B cell (primary cell): ENCODE measurements at regions of chr4 and their contacts with region 1.

Region 1: DNA sequence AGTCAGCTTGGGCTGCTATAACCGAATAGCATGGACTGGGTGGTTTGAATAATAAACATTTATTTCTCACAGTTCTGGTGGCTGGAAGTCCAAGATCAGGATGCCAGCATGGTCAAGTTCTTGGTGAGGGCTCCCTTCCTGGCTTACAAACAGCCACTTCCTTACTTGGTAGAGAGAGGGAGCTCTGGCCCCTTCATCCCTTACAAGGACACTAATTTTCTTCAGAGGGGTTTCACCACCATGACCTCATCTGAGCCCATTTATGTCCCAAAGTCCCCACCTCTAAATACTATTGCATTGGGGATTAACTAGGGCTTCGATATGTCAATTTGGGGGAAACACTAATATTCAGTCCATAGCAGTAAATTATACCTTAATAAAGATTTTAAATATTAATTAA is 61.8 kb downstream of the CLNK start:
- DNase-seq: peak; percentile 46
- ATAC-seq: peak; percentile 28
- H3K4me3 ChIP-seq: no peak overlapping the region
- H3K4me3 Mint-ChIP-seq: no peak overlapping the region
- H3K27ac ChIP-seq: no peak overlapping the region
- H3K27ac Mint-ChIP-seq: no peak overlapping the region
- H3K4me1 ChIP-seq: peaks cover 4 to 13% of the 10 kb centered on the region in 2 donors
- H3K4me1 Mint-ChIP-seq: peaks cover 20% of the 10 kb centered on the region
- H3K27me3 ChIP-seq: no peaks in the 10 kb centered on the region
- H3K27me3 Mint-ChIP-seq: no peaks in the 10 kb centered on the region
- CTCF ChIP-seq: peak; percentile 63

Region 2: DNA sequence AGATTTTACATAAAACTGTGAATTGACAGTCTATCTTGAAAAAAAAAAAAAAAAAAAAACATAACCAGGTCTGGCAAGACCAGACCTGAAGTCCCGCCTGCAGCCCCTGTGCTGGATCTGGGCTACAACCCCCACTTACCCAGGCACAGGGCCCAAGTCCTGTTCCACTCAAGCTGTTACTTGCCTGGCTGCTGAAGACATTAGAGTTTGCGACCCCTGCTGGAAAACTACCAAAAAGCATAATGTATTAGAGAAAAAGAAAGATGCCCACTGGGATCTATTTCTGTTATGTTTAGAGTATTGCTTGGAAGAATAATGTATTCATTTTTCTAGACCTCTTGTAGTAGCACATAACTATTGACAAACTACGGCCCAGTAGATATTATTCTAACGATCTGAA is 801.3 kb after region 1 on chr4:
- CTCF ChIA-PET with region 1: interaction called, 11 read pairs
- POLR2A ChIA-PET with region 1: no interaction called
- intact Hi-C with region 1: loop called (anchors 1 kb)
- DNase-seq: peak; percentile 71
- ATAC-seq: no peak
- H3K4me3 ChIP-seq: no peak overlapping the region
- H3K4me3 Mint-ChIP-seq: no peak overlapping the region
- H3K27ac ChIP-seq: no peak overlapping the region
- H3K27ac Mint-ChIP-seq: no peak overlapping the region
- H3K4me1 ChIP-seq: peaks cover 40 to 42% of the 10 kb centered on the region in 2 donors
- H3K4me1 Mint-ChIP-seq: peaks cover 73% of the 10 kb centered on the region
- H3K27me3 ChIP-seq: no peaks in the 10 kb centered on the region
- H3K27me3 Mint-ChIP-seq: no peaks in the 10 kb centered on the region
- CTCF ChIP-seq: peak; percentile 77